Common myeloid progenitor, CD34-positive (primary cell): ENCODE measurements at regions of chr2 and their contacts with region 1.

Region 1: GRCh38 chr2:102074152-102074783 is 68.3 kb upstream of the IL1R1 start:
- DNase-seq: peak; percentile 40 to 78 (median 73)
- H3K4me3 ChIP-seq: no peak overlapping the region
- H3K27ac ChIP-seq: no peak overlapping the region
- H3K4me1 ChIP-seq: peaks cover 0 to 17% (median 13%) of the 10 kb centered on the region in 4 experiments
- H3K27me3 ChIP-seq: no peaks in the 10 kb centered on the region

Region 2: DNA sequence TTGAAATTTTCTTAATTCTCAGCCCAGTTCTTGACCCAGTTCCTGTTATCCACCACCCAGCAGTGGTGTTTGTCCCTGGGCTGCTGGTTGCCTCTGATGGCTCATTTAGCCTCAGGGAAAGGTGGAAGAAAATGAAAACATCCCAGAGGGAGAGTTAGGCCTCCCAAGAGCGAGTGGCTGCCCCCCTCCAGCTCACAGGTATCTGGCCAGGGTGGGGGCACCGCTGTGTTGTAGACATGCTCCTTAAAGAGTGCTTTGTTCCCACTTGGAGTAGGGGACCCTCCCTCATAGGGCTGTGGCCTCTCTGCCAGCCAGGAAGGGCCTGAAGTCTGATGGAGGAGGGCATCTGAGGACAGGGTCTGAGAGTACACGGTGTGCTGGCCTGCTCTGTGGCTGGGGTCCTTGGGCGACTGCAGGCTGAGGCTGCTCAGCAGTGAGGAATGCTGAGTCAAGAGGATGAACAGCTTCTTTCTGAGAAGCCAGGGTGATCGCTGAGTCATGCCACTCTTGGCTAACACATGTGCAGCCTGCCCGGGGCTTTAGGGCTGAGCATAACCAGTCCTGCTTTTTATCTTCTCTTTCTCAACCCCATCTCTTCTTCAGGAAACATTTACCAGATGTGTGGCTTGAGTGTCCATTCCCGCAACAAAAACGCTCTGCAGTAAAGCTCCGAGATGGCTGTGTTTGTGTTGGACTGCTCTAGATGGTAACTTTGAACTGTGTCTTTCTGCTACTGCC is 10.2 kb before region 1 on chr2:
- CTCF ChIA-PET with region 1: interaction called, 11 read pairs
- POLR2A ChIA-PET with region 1: no interaction called
- DNase-seq: peak; percentile 83 to 95 (median 94)
- H3K4me3 ChIP-seq: peak overlapping the region in 2 of 7 experiments; percentile 12 to 42
- H3K27ac ChIP-seq: peak overlapping the region in 1 of 2 experiments; percentile 72
- H3K4me1 ChIP-seq: peaks cover 7 to 42% (median 24%) of the 10 kb centered on the region in 4 experiments
- H3K27me3 ChIP-seq: no peaks in the 10 kb centered on the region